ENCODE measurements at regions of chr4 and their contacts with region 1.

Region 1: GRCh38 chr4:75666299-75666698 is 6.9 kb downstream of the G3BP2 start:
- DNase-seq: no peak
- H3K4me3 ChIP-seq: peak overlapping the region in 1 of 4 experiments; percentile 14; a peak in 2 of 8 replicates
- H3K27ac ChIP-seq: no peak overlapping the region
- H3K4me1 ChIP-seq: peaks cover 0 to 4% (median 3%) of the 10 kb centered on the region in 4 experiments; a peak in 4 of 7 replicates
- H3K27me3 ChIP-seq: no peaks in the 10 kb centered on the region
- CTCF ChIP-seq: no peak
- EP300 ChIP-seq: no peak
- POLR2A ChIP-seq: no peak
- RAD21 ChIP-seq: no peak

Region 2: DNA sequence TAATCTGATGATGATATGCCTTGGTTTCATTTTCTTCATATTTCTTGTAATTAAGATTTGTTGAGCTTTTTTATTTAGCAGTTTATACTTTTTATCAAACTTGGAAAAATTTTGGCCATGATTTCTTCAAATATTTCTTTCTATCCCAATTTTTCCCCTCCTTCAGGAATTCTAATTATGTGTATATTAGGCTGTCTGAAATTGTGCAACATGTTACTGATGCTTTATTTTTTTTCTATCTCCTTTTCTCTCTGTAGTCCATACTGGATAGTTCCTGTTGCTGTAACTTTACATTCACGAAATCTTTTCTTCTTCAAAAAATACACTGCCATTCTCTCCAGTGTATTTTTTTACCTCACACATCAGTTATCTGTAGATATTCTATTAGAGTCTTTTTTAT is 141.2 kb before region 1 on chr4:
- CTCF ChIA-PET with region 1: no interaction called
- POLR2A ChIA-PET with region 1: no interaction called
- DNase-seq: no peak
- H3K4me3 ChIP-seq: no peak overlapping the region
- H3K27ac ChIP-seq: no peak overlapping the region
- H3K4me1 ChIP-seq: no peaks in the 10 kb centered on the region
- H3K27me3 ChIP-seq: peaks cover 0 to 1% (median 0%) of the 10 kb centered on the region in 4 experiments; a peak in 1 of 7 replicates
- CTCF ChIP-seq: no peak
- EP300 ChIP-seq: no peak
- POLR2A ChIP-seq: no peak
- RAD21 ChIP-seq: no peak

Region 3: DNA sequence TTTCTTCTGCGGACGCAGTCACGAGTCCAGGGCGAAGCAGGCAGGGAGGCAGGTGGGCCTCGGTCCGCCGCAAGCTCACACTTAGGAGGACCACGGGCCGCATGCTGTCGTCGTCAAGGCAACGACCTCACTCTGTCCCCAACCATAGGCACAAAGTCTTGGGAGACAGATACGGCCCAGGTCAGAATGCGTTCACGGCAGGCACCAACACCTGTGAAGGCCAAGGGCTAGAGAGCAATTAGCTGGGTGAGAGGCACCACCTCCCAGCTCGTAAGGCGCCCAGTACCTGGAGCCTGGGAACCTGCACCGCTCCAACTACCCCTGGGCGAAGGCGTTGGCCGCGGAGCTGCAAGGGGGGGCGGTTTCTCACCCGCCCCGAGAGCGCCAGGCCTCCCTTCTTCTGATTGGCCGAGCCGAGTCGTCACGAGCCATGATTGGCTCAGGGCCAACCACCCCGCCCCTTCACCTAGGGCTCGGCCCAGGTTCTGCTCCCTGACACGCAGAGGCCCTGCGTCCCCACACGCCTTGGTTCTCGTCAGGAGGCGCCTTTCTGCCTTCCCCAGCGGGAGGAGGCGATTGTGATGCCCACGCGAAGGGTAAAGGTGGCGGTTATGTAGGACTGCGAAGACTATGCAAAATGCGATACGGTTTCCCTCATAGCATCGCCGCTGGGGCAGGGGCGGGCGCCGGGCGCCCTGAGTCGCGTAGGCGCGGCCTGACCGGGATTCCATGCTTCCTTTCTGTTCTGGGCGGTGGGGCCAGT is 35.9 kb before region 1 on chr4 and contains the start of gene CDKL2:
- CTCF ChIA-PET with region 1: no interaction called
- POLR2A ChIA-PET with region 1: no interaction called
- DNase-seq: peak; percentile 62 to 93
- H3K4me3 ChIP-seq: peak within 1 kb of the TSS; percentile 78 to 84 (median 84)
- H3K27ac ChIP-seq: no peak within 1 kb of the TSS
- H3K4me1 ChIP-seq: peaks cover 0 to 6% (median 2%) of the 10 kb centered on the region in 4 experiments; a peak in 4 of 7 replicates
- H3K27me3 ChIP-seq: no peaks in the 10 kb centered on the region
- CTCF ChIP-seq: 0 out of 4 replicates have a peak, but pooled peaks of 1 of the 3 experiments have one; percentile 0
- EP300 ChIP-seq: no peak
- POLR2A ChIP-seq: peak in 1 of 2 experiments; percentile 49; a peak in 1 of 3 replicates
- RAD21 ChIP-seq: no peak
- total RNA-seq, gene CDKL2: 1.4 and 2.1 TPM in 2 replicates

Region 4: GRCh38 chr4:75715105-75715799 is 49.0 kb after region 1 on chr4:
- CTCF ChIA-PET with region 1: interaction called, 5 read pairs
- POLR2A ChIA-PET with region 1: interaction called, 117 read pairs
- DNase-seq: peak in 1 of 2 experiments; percentile 41
- H3K4me3 ChIP-seq: no peak overlapping the region
- H3K27ac ChIP-seq: no peak overlapping the region
- H3K4me1 ChIP-seq: no peaks in the 10 kb centered on the region; a peak in 2 of 7 replicates
- H3K27me3 ChIP-seq: no peaks in the 10 kb centered on the region
- CTCF ChIP-seq: no peak
- EP300 ChIP-seq: no peak
- POLR2A ChIP-seq: no peak
- RAD21 ChIP-seq: no peak

Measured in H1 (cell line).